ENCODE measurements at regions of chr11 and their contacts with region 1.

Region 1: DNA sequence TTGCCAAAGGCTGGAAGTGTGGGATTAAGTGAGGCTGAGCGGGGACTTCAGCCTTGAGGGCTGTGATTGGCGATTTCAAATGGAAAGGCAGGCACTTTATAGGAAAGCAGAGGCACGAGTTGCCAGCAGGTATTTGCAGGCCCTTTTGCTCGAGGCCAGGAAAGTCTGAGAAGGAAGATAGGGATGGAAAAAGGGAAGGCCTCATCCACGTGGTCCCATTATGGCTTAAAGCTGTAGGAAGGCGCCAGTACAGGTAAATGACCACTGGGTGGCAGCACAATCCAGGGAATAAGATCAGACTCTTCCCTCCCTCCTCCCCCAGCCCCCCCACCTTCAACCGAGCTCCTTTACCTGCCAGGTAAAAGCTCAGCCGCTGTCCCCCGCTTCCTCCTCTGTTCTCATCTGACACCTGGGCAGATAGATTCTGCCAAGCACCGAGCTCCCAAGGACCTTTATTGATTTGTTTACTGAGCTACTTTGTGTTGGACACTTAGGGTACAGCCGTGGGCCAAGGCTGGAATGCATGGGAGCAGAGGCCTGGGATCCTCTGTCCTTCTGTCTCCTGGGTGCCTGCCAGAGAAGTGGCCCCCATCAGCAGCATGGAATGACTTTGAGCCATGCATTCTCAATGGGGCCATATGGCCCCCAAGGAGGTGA is 7.5 kb downstream of the P2RX3 start:
- DNase-seq: peak; percentile 71 to 73
- H3K4me3 ChIP-seq: no peak overlapping the region
- H3K27ac ChIP-seq: no peak overlapping the region
- H3K4me1 ChIP-seq: no peaks in the 10 kb centered on the region
- H3K27me3 ChIP-seq: no peaks in the 10 kb centered on the region
- CTCF ChIP-seq: peak; percentile 90

Region 2: DNA sequence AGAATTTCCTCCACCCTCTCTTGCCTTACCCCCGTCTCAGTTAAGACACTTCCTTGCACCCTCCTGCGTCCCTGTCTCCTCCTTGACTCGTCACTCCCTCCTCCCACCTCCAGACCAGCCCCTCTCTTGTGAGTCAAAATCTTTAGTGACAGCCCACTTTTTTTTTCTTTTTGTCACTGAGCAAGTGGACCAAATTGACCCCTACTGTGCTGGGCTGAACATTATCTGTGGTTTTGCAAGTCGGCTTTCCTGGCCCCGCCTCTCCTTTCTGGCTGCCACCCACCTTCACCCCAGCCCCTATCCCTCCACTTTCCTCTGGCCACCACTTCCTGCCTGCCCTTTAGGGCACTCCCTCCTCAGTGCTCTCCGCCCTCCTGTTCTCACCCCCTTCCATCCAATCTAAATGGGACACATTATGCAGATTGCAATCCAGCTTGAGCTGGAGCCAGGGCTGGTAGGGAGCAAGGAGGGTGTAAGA is 108.4 kb before region 1 on chr11 and contains the start of gene APLNR:
- CTCF ChIA-PET with region 1: interaction called, 11 read pairs
- POLR2A ChIA-PET with region 1: no interaction called
- intact Hi-C with region 1: no loop called
- DNase-seq: no peak
- H3K4me3 ChIP-seq: no peak within 1 kb of the TSS
- H3K27ac ChIP-seq: no peak within 1 kb of the TSS
- H3K4me1 ChIP-seq: no peaks in the 10 kb centered on the region
- H3K27me3 ChIP-seq: peaks cover 34% of the 10 kb centered on the region
- CTCF ChIP-seq: no peak
- total RNA-seq, gene APLNR: not detected in 2 replicates

Region 3: DNA sequence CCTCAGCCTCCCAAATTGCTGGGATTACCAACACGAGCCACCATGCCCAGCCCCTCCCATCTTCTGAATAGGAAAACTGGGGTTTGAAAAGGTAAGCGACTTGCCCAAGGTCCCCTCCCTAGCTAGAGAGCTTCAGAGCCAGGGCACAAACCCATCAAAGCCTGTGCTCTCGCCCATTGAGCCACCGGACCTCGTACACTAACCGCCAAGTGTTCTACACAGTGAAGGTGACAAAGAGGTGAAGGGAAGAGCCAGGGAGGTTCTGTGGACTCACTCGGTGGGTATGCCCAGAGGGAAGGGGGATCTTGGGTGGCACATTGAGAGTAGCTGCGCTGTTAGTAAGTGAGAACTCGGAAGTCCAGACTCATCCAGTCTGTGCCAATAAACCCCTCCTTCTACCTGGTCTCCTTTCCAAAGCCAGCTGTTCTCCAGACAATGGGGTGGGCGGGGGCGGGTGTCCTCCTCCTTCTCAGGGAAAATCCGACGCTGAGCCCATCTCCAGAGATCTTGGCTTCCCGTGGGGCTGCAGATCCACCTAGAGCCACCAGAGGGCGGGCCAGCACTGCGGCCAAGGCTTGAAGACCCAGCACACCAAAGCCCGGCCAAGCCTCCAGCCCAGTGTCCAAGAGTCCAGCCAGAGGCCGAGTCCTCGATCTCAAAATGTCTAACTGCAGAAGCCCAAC is 111.4 kb after region 1 on chr11:
- CTCF ChIA-PET with region 1: interaction called, 3 read pairs
- POLR2A ChIA-PET with region 1: no interaction called
- intact Hi-C with region 1: loop called (anchors 1 kb)
- DNase-seq: peak; percentile 74 to 90
- H3K4me3 ChIP-seq: no peak overlapping the region
- H3K27ac ChIP-seq: no peak overlapping the region
- H3K4me1 ChIP-seq: peaks cover 22% of the 10 kb centered on the region
- H3K27me3 ChIP-seq: peaks cover 22% of the 10 kb centered on the region
- CTCF ChIP-seq: peak; percentile 100

Region 4: GRCh38 chr11:57512646-57513451 is 167.2 kb after region 1 on chr11:
- CTCF ChIA-PET with region 1: no interaction called
- POLR2A ChIA-PET with region 1: no interaction called
- intact Hi-C with region 1: no loop called
- DNase-seq: no peak
- H3K4me3 ChIP-seq: no peak overlapping the region
- H3K27ac ChIP-seq: no peak overlapping the region
- H3K4me1 ChIP-seq: peaks cover 12% of the 10 kb centered on the region; the same call in 1 of the 2 replicates
- H3K27me3 ChIP-seq: peaks cover 21% of the 10 kb centered on the region
- CTCF ChIP-seq: no peak

Region 5: DNA sequence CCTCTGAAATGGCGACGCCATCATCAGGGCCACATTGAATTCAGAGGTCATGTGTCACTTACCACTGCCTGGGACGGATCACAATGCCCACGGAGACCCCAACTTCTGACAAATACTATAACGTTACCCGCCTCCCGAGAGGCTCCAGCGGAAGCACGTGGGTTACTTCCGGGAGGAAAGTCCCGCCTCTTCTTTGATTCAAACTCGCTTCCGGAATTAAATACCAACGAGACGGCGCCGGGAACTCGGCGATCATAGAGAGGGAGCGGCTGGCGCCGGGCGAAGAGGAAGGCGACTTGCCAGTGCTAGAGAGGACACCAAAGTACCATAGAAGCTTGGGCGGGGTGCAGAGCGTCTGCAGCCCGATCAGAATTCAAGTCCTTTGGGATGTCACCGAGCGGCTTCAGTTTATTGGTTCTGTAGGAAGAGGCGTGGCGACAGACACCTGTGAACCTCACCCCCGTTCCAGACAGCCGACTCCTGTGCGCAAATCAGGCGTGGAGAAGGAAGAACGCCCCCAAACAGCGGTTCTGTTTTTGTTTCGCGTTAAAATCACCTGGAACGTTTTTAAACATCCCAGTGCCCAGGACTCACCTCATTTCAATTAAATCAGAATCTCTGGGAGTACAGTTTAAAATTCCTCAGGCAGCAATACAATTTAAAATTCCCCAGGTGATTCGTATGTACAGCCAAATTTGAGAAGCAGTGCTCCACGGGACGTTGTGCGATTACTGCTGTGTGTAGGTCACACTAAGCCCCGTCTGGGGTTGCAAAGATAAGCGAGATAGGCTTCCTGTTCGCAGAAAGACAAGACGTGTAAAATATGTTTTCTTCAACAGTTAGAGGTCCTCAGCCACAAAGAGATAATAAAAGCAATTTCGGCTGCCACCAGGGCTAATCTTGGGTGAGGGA is 185.2 kb after region 1 on chr11 and contains the start of gene TIMM10:
- CTCF ChIA-PET with region 1: no interaction called
- POLR2A ChIA-PET with region 1: interaction called, 7 read pairs
- intact Hi-C with region 1: loop called (anchors 1 kb)
- DNase-seq: peak; percentile 98 to 99
- H3K4me3 ChIP-seq: peak within 1 kb of the TSS; percentile 83
- H3K27ac ChIP-seq: peak within 1 kb of the TSS; percentile 48
- H3K4me1 ChIP-seq: peaks cover 27% of the 10 kb centered on the region
- H3K27me3 ChIP-seq: peaks cover 4% of the 10 kb centered on the region; the same call in 1 of the 2 replicates
- CTCF ChIP-seq: peak; percentile 23; the same call in 1 of the 2 replicates
- total RNA-seq, gene TIMM10: 90.2 and 94.7 TPM in 2 replicates

Region 6: GRCh38 chr11:58513747-58514367 is 1168.2 kb after region 1 on chr11:
- CTCF ChIA-PET with region 1: no interaction called
- POLR2A ChIA-PET with region 1: no interaction called
- intact Hi-C with region 1: loop called (anchors 1 kb)
- DNase-seq: peak; percentile 65 to 67
- H3K4me3 ChIP-seq: no peak overlapping the region
- H3K27ac ChIP-seq: no peak overlapping the region
- H3K4me1 ChIP-seq: no peaks in the 10 kb centered on the region
- H3K27me3 ChIP-seq: 0 out of 2 replicates have a peak, but pooled peaks cover 3% of the 10 kb centered on the region
- CTCF ChIP-seq: peak; percentile 87

Measured in PC-9 (cell line).